Cardiac septum (tissue), 1 donor: ENCODE measurements at regions of chr1 and their contacts with region 1.

Region 1: DNA sequence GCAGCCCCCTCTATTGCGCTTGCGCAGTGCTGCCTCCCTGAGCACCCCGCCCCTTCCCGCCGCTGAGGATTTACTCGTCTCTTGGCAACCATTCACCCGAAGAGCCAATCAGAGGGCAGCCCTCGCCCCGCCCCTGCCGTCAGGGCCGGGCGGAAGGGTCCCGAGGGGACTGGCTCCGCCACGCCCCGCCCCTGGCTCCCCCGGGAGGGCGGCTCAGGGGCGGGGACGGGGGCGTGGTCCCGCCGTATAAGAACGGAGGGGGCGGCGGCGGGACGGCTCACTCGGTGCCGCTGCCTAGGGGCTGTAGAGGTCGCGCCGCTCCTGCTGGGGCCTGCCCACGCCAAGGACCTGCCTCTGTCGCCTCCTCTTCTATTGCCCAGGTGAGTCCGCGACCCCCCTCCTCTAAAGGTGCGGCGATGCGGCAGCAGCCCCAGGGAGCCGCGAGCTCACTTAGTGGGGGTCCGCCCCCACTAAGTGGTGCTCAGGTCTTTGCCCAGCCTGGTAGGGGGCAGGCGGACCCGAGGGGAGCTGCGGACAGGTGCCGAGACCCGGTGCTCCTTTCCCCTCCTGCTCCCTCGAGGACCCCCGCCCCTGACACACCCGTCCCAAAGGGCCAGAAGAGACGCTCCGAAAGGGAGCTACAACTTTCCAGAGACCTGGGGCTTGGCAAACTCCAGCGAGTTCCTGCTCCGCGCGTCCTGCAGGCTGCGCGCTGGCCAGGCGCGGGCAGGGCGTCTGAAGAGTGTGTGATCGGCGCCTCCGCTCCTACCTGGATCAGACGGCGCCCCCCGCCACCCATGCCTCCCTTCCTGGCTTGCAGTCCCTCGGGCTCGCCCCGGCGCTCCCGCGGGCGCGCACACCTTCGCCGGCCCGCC is at the start of gene TENT5C:
- DNase-seq: peak; percentile 98
- total RNA-seq, gene TENT5C: 7.4 TPM

Region 2: GRCh38 chr1:117367047-117368018 is 238.7 kb before region 1 on chr1 and contains the start of gene MAN1A2:
- intact Hi-C with region 1: loop called (anchors 10 kb)
- DNase-seq: peak; percentile 97
- total RNA-seq, gene MAN1A2: 36.3 TPM

Region 3: DNA sequence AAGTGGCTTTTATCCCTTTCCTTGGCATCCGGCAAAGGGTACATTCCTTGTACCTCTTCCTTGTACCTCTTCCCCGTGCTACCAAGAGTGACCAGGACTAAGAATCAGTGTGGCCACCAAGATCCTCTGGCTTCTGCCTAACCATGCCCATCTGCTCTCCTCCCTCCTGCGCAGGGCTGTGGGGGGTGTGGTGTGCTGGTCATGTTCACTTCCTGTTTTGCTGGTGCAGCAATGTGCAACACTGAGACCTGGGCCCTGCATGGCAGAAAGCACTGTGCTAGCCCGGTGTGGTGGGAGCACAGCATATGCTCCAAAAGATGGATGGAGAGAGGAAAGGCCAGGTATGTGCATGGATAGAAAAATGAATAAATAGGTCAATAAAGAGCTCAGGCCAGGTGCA is 33.5 kb before region 1 on chr1:
- intact Hi-C with region 1: no loop called
- DNase-seq: no peak

Region 4: GRCh38 chr1:117644696-117645311 is 38.8 kb after region 1 on chr1:
- intact Hi-C with region 1: no loop called
- DNase-seq: no peak